ENCODE measurements at regions of chr11 and their contacts with region 1.

Region 1: GRCh38 chr11:128956401-128957201 is 13.9 kb upstream of the TP53AIP1 start:
- DNase-seq: peak; percentile 68 to 71
- H3K4me3 ChIP-seq: no peak overlapping the region
- H3K4me1 ChIP-seq: no peaks in the 10 kb centered on the region
- H3K27me3 ChIP-seq: peaks cover 9% of the 10 kb centered on the region

Region 2: GRCh38 chr11:128105950-128106349 is 850.7 kb before region 1 on chr11:
- in situ Hi-C with region 1: no loop called
- DNase-seq: no peak
- H3K4me3 ChIP-seq: no peak overlapping the region
- H3K4me1 ChIP-seq: no peaks in the 10 kb centered on the region
- H3K27me3 ChIP-seq: no peaks in the 10 kb centered on the region

Region 3: DNA sequence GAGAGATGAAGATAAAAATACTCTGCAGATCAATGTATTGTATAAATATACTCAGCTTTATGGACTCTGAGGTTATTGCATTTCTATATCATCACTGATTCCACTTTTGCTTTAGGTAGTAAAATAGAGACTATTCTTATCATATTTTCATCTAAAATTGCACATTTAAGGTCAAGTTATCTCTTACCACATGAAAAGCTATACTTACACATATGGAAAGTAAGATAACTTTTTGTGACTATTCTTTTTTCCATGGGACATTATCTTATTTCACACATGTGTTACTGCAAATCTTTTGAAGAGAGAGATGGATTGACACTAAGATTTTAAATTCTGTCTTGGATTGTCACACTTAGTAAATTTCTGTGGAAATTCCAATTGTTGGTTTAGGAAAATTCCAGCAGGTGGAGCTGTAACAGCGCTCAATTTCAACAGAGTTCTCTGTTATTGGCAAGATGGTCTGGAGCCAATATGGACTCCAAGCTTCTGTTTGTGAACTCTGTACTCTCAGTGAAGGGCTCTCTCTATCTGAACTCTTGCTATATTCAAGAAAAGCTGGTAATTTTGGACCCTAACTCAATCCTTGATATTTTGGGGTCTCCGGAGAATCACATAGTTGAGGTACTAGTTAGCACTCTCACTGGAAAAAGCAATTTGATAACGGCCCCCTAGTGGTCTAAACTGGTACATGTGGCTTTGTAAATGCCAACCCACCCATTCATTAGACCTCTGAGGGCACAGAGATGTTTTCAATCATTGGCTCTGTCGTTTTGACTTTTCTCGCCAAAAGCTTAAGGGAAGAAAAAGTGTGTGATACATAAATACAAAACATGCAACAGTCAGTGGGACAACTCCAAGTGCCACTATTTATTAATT is 798.9 kb before region 1 on chr11:
- in situ Hi-C with region 1: loop called (anchors 25 kb)
- DNase-seq: peak; percentile 47 to 73
- H3K4me3 ChIP-seq: no peak overlapping the region
- H3K4me1 ChIP-seq: no peaks in the 10 kb centered on the region
- H3K27me3 ChIP-seq: no peaks in the 10 kb centered on the region

Region 4: GRCh38 chr11:128686745-128687177 is 269.8 kb before region 1 on chr11:
- in situ Hi-C with region 1: no loop called
- DNase-seq: no peak
- H3K4me3 ChIP-seq: no peak overlapping the region
- H3K4me1 ChIP-seq: no peaks in the 10 kb centered on the region
- H3K27me3 ChIP-seq: peaks cover 12% of the 10 kb centered on the region; the same call in 1 of the 2 replicates